ENCODE measurements at regions of chr17 and their contacts with region 1.

Region 1: GRCh38 chr17:66727639-66728570 is 107.0 kb upstream of the CACNG5 start:
- DNase-seq: peak; percentile 42 to 74 (median 51)
- H3K4me3 ChIP-seq: no peak overlapping the region
- H3K27ac ChIP-seq: no peak overlapping the region
- H3K4me1 ChIP-seq: peaks cover 9% of the 10 kb centered on the region
- H3K27me3 ChIP-seq: no peaks in the 10 kb centered on the region
- CTCF ChIP-seq: no peak
- EP300 ChIP-seq: no peak
- POLR2A ChIP-seq: no peak

Region 2: DNA sequence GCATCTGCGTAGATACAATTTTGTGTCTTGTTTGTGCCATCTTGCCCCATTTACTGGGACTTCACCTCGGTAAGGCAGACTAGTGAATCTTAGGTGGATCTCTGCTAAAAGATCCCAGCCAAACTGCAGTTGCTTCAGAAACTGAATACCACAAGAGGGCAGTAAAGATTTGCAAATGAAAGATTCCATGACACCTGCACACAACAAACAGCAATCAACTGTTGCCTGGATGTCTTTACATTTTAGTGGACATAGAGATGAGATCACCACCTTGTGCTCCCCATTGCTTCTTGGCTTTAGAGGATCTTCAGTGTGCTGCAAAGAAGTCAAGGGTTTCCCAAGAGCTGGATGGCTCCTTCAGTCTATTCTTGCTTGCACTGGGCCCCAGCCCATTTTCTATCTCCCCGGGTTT is 12.2 kb before region 1 on chr17:
- intact Hi-C with region 1: loop called in 1 of 4 experiments (anchors 1 kb)
- DNase-seq: no peak
- H3K4me3 ChIP-seq: no peak overlapping the region
- H3K27ac ChIP-seq: no peak overlapping the region
- H3K4me1 ChIP-seq: no peaks in the 10 kb centered on the region
- H3K27me3 ChIP-seq: no peaks in the 10 kb centered on the region
- CTCF ChIP-seq: peak in 2 of 3 donors; percentile 30 to 62
- EP300 ChIP-seq: no peak
- POLR2A ChIP-seq: no peak

Region 3: DNA sequence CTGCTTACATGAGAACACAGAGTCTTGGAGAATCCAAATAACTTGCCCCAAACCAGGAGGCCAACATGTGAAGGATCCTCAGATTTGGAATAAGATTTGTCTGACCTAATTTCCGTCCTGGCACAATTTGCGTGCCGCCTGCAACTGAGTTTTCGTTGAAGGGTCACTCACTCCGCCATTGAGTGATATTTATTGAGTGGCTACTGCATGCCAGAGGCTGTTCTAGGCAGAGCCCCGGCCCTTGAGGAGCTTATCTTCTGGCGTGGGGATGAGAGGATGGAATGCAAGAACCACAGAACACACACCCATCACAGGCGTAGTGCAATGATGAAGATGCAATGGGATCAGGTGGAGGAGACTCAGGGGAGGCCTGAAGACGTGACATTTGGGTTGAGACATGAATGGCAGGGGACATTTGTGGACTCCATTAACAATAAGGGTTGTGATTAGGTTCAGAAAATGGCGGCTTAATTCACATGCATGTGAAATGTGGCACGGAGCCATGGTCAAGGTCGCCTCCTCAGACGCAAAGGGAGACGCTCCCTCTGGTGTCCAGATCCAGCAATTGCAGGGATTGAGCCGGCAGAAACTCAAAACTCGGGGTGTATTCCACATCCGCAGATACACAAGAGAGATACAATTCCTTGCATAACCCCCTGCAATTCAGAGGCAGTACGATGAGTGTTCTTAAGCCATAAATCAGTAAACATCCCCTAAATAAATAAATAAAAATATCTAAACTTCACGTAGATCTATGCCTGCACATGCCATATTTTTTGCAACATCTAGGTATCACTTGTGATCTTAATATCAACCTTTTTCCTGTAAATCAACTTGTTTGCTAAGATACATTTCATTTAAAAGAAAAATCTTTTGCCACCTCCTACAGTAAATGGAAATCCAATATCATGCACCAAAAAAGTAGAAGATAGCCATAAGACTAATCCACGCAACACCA is 178.7 kb after region 1 on chr17:
- intact Hi-C with region 1: loop called in 2 of 4 experiments (anchors 5 to 10 kb)
- DNase-seq: peak; percentile 79 to 87 (median 81)
- H3K4me3 ChIP-seq: no peak overlapping the region
- H3K27ac ChIP-seq: no peak overlapping the region
- H3K4me1 ChIP-seq: peaks cover 7% of the 10 kb centered on the region
- H3K27me3 ChIP-seq: no peaks in the 10 kb centered on the region
- CTCF ChIP-seq: peak; percentile 52 to 75 (median 58)
- EP300 ChIP-seq: no peak
- POLR2A ChIP-seq: no peak

Measured in ovary (tissue), 10 donors.